ENCODE measurements at regions of chr12 and their contacts with region 1.

Region 1: DNA sequence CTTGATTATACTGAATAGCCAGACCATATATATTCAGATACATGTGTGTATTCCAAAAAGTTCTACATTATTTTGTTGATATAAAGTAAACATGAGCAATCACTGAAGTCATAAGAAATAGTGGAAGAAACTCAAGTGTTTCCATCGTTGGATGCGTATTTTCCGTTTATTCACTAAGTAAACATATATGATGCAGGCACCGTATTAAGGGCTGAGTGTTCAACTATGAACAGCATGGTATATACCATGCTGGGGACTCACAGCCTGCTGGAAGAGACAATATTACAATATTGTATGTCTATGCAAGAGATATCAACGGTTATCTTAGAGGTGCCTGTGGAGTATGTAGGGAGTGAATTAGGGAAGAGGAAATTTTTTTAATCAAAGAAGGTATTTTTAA is 1.2 kb downstream of the PYROXD1 start:
- DNase-seq: no peak
- ATAC-seq: no peak
- H3K4me3 Mint-ChIP-seq: peak overlapping the region; percentile 93
- H3K27ac Mint-ChIP-seq: peak overlapping the region; percentile 92
- H3K4me1 Mint-ChIP-seq: peaks cover 23% of the 10 kb centered on the region
- H3K27me3 Mint-ChIP-seq: no peaks in the 10 kb centered on the region

Region 2: GRCh38 chr12:21276826-21277225 is 161.8 kb before region 1 on chr12:
- POLR2A ChIA-PET with region 1: no interaction called
- DNase-seq: no peak
- ATAC-seq: no peak
- H3K4me3 Mint-ChIP-seq: no peak overlapping the region
- H3K27ac Mint-ChIP-seq: no peak overlapping the region
- H3K4me1 Mint-ChIP-seq: no peaks in the 10 kb centered on the region
- H3K27me3 Mint-ChIP-seq: peaks cover 20% of the 10 kb centered on the region

Region 3: GRCh38 chr12:21501379-21501956 is 62.8 kb after region 1 on chr12 and contains the starts of genes GOLT1B and RECQL:
- POLR2A ChIA-PET with region 1: interaction called, 20 read pairs
- DNase-seq: peak; percentile 79
- ATAC-seq: peak; percentile 94
- H3K4me3 Mint-ChIP-seq: no peak within 1 kb of the TSS
- H3K27ac Mint-ChIP-seq: no peak within 1 kb of the TSS
- H3K4me1 Mint-ChIP-seq: peaks cover 36% of the 10 kb centered on the region
- H3K27me3 Mint-ChIP-seq: no peaks in the 10 kb centered on the region
- total RNA-seq, gene GOLT1B: 33.2 to 38.1 TPM
- total RNA-seq, gene RECQL: 82.1 to 86.8 TPM

Region 4: GRCh38 chr12:21509768-21510167 is 71.1 kb after region 1 on chr12:
- POLR2A ChIA-PET with region 1: interaction called, 13 read pairs
- DNase-seq: no peak
- ATAC-seq: peak; percentile 96
- H3K4me3 Mint-ChIP-seq: peak overlapping the region; percentile 77
- H3K27ac Mint-ChIP-seq: peak overlapping the region; percentile 92
- H3K4me1 Mint-ChIP-seq: peaks cover 22% of the 10 kb centered on the region
- H3K27me3 Mint-ChIP-seq: no peaks in the 10 kb centered on the region